Endothelial cell of umbilical vein (primary cell): ENCODE measurements at regions of chr2 and their contacts with region 1.

Region 1: DNA sequence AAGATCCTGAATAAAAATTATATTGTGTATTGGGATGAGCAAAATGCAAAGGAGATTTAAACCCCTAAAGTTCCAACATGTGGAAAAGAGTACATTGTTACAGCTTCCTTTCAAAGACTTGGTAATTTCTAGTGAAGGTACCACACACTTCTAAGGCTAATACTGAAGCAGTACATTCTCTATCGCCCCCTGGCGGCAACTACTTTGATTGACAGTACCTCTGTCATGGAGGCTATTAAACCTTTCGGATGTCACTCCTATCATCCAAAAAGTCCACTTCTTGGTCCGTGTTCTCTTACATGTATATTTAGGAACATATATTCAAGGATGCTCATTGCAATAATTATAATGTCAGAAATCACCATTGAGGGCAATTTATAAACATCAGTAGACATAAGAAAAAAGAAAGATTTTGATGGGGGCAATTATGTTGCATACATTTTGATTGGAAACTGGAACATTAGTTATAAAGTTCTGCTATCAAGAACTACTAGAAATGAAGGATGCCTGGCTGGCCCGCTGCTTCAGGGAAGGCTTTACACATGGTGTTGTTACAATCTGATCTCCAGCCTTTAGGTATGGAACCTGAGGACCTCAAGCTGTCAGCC is 601.6 kb downstream of the CPS1 start:
- DNase-seq: peak; percentile 67
- H3K4me3 ChIP-seq: no peak overlapping the region
- H3K27ac ChIP-seq: no peak overlapping the region
- H3K4me1 ChIP-seq: no peaks in the 10 kb centered on the region
- H3K27me3 ChIP-seq: peaks cover 0 to 2% of the 10 kb centered on the region in 2 experiments
- CTCF ChIP-seq: peak; percentile 67 to 71
- POLR2A ChIP-seq: no peak

Region 2: DNA sequence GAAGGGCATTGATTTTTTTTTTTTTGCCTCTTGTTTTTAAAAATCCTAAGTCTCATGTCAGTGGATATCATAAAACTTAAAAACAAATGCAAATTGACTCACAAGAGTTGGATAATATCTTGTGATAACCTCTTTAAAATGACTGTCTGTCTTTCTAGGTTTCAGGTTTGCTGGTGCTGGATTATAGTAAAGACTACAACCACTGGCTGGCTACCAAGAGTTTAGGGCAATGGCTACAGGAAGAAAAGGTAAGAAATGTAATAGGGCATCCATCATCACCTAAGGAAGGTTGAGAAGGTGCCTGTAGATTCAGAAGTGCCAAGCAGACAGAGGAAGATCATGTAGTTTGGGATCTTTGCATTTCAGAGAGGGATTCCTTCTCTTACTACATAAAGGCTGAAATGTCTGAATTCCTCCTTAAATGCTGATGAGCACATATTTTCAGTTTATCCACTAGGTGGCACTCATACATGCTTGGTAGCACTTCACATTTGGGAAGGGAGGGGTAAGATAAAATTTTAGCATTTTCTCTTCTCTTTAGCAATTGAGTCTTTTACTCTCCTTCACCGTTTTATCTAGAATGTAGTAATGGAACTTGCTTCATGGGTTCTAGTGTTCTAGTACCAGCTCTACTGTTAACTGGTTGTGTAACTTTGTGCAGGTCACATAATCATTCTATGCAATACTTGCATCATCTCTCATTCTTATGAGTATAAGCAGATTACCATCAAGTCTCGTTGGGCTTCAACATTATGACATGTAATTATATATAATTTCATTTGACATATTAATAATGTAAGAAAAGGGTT is 580.5 kb before region 1 on chr2:
- CTCF ChIA-PET with region 1: interaction called, 5 read pairs
- POLR2A ChIA-PET with region 1: no interaction called
- dilution Hi-C with region 1: no loop called
- intact Hi-C with region 1: loop called (anchors 1 kb)
- DNase-seq: peak; percentile 45
- H3K4me3 ChIP-seq: no peak overlapping the region
- H3K27ac ChIP-seq: no peak overlapping the region
- H3K4me1 ChIP-seq: no peaks in the 10 kb centered on the region
- H3K27me3 ChIP-seq: no peaks in the 10 kb centered on the region
- CTCF ChIP-seq: peak; percentile 44 to 63
- POLR2A ChIP-seq: no peak

Region 3: GRCh38 chr2:211035548-211036185 is 122.3 kb before region 1 on chr2:
- CTCF ChIA-PET with region 1: interaction called, 8 read pairs
- POLR2A ChIA-PET with region 1: no interaction called
- dilution Hi-C with region 1: no loop called
- intact Hi-C with region 1: loop called (anchors 5 kb)
- DNase-seq: peak; percentile 53
- H3K4me3 ChIP-seq: no peak overlapping the region
- H3K27ac ChIP-seq: no peak overlapping the region
- H3K4me1 ChIP-seq: no peaks in the 10 kb centered on the region
- H3K27me3 ChIP-seq: no peaks in the 10 kb centered on the region
- CTCF ChIP-seq: peak; percentile 43 to 56
- POLR2A ChIP-seq: no peak

Region 4: DNA sequence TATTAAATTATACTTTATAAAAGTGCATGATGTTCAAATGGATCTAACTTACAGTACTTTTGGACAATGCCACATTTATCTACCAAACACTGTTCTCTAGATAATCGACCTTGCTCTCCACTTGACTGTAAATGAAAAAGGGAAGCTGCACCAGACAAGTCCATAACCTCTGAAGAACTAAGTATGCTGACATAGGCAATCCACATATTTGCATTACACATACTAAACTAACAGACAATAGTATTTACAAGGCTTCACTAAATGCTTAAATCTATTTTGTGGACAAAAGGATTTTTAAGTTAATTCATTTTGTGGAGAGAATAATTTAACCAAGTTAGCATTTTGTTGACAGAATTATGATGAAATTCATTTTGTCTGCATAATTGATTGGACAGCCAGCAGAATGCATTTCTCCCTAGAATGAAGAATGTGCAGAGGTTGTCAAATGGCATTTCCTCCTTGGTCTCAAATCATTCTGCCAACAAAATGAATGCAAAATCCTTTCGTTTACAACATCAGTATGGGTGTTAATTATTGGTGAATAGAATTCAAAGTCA is 80.7 kb before region 1 on chr2:
- CTCF ChIA-PET with region 1: interaction called, 275 read pairs
- POLR2A ChIA-PET with region 1: no interaction called
- dilution Hi-C with region 1: no loop called
- intact Hi-C with region 1: no loop called
- DNase-seq: no peak
- H3K4me3 ChIP-seq: no peak overlapping the region
- H3K27ac ChIP-seq: no peak overlapping the region
- H3K4me1 ChIP-seq: no peaks in the 10 kb centered on the region
- H3K27me3 ChIP-seq: no peaks in the 10 kb centered on the region
- CTCF ChIP-seq: no peak
- POLR2A ChIP-seq: no peak

Region 5: DNA sequence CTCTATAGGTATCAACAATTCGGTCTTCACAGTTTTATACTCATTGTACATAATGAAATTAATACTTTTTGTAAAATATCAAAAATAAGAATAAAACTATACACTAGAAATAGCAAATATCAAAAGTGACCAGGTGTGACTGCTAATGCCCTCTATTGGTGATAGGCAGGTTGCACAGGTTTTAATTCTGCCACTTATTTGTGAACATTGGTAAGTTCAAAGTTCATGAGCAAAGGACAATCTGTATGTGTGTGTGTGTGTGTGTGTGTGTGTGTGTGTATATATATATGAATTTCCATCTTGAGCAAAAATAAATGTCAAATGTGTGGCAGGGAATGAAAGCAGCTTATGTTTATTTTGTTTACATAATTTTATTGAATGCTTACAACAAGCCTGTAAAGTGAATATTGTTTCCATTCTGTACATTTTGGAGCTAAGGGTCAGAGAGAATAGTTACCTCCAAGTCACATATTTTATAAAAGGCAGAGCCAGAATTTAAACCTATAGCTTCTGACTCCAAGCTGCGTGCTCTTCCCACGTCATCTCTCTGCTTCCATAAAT is 64.1 kb before region 1 on chr2:
- CTCF ChIA-PET with region 1: interaction called, 275 read pairs
- POLR2A ChIA-PET with region 1: no interaction called
- dilution Hi-C with region 1: no loop called
- intact Hi-C with region 1: no loop called
- DNase-seq: peak; percentile 11
- H3K4me3 ChIP-seq: no peak overlapping the region
- H3K27ac ChIP-seq: no peak overlapping the region
- H3K4me1 ChIP-seq: no peaks in the 10 kb centered on the region
- H3K27me3 ChIP-seq: no peaks in the 10 kb centered on the region
- CTCF ChIP-seq: peak; percentile 11 to 34
- POLR2A ChIP-seq: no peak

Region 6: DNA sequence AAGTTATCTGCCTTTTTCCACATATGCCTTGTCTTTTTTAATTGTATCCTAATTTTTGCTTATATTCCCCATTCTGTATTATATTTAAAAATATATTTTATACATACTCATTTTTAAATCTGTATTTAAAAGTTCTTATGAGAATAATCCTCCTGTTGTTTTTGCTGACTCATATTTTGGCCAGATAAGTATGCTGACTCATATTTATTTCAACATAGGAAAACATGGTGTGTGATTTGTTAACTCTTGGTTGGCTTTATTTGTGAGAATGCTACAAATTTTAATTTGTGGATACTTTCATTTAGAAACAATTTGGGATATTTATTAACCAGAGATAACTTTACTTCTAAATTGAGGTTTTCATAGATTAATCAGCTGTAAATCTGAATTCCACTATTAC is 13.9 kb before region 1 on chr2:
- CTCF ChIA-PET with region 1: interaction called, 12 read pairs
- POLR2A ChIA-PET with region 1: no interaction called
- dilution Hi-C with region 1: no loop called
- intact Hi-C with region 1: no loop called
- DNase-seq: peak; percentile 52
- H3K4me3 ChIP-seq: no peak overlapping the region
- H3K27ac ChIP-seq: no peak overlapping the region
- H3K4me1 ChIP-seq: peaks cover 2% of the 10 kb centered on the region
- H3K27me3 ChIP-seq: no peaks in the 10 kb centered on the region
- CTCF ChIP-seq: no peak
- POLR2A ChIP-seq: no peak

Region 7: DNA sequence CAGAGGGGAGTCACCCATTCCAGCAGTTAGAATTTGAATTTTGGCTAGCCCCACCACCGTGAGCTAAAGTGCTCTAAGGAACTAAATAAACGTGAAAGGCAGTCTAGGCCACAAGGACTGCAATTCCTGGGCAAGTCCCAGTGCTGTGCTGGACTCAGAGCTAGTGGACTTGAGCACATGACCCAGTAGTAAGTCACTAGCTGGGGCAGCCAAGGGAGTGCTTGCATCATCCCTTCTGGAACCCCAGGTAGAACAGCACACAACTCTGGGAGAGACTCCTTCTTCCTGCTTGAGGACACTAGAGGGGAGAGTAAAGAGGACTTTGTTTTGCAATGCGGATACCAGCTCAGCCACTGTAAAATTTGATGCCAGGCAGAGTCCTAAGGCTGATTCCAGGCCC is 70.6 kb after region 1 on chr2:
- CTCF ChIA-PET with region 1: no interaction called
- POLR2A ChIA-PET with region 1: no interaction called
- dilution Hi-C with region 1: no loop called
- intact Hi-C with region 1: no loop called
- DNase-seq: no peak
- H3K4me3 ChIP-seq: no peak overlapping the region
- H3K27ac ChIP-seq: no peak overlapping the region
- H3K4me1 ChIP-seq: no peaks in the 10 kb centered on the region
- H3K27me3 ChIP-seq: no peaks in the 10 kb centered on the region
- CTCF ChIP-seq: no peak
- POLR2A ChIP-seq: no peak